ENCODE measurements at regions of chr5 and their contacts with region 1.

Region 1: DNA sequence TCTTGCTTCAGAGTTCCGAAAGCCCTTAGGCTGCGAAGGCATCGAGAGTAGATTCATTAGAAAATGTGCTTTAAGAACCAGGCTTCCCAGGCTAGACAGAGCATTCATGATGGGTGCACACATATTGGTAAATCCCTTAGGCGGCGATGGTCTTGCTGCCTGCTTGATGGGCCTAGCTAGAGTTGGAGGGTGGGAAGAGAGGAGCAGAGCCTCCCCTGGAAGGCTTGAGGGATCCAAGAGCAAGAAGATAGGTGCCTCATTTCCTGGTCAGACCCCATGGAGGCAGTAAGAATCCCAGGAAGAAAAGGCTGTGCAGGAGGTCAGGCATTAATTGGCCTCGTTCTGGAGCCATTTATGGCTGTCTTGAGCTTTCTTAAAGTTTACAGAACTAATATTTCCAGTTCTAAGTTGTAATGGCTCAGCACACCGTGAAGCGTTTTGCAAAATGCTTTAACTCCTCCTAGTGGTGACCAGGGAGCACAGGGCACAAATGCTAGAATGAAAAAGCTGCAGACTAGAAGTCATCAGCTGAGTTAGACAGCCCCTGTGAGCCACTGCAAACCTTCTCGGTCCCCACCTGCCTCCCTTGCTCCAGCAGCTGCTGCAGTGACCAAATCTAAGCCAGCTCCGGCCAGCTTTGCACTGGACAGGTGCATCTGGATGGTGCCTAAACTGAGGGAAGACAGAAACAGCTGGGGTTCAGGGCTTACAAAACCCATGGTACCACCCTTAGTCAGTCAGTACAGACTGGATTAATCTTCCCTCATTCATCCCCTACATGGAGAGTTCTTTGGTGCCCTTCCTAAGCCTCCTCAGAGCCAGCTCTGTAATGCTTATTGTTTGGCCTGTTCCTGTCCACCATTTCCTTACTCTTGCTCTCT is 14.7 kb downstream of the SLC45A2 start:
- DNase-seq: peak; percentile 15
- ATAC-seq: peak; percentile 69
- H3K4me3 Mint-ChIP-seq: no peak overlapping the region
- H3K27ac Mint-ChIP-seq: no peak overlapping the region
- H3K4me1 Mint-ChIP-seq: peaks cover 14% of the 10 kb centered on the region
- H3K27me3 Mint-ChIP-seq: no peaks in the 10 kb centered on the region
- CTCF ChIP-seq: peak; percentile 50

Region 2: DNA sequence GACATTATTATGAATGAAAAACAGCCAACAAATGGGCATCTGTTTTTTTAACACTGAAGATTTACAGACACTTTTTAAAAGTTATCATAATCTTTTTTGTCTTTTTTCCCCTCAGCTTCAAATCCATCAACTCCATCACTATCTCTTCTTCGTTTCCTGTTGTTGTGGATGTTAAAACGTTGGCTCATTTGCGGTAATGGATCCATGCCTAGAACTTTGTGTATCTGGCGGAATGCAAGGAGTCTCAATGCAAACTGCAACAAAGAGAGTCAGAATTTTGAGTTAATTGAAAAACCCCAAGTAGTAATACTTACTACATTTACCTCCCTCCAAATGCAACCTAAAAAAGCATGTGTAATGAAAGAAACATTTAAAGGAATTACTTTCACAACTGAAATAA is 1614.1 kb before region 1 on chr5:
- CTCF ChIA-PET with region 1: no interaction called
- POLR2A ChIA-PET with region 1: no interaction called
- intact Hi-C with region 1: no loop called
- DNase-seq: no peak
- ATAC-seq: no peak
- H3K4me3 Mint-ChIP-seq: no peak overlapping the region
- H3K27ac Mint-ChIP-seq: no peak overlapping the region
- H3K4me1 Mint-ChIP-seq: peaks cover 4% of the 10 kb centered on the region
- H3K27me3 Mint-ChIP-seq: no peaks in the 10 kb centered on the region
- CTCF ChIP-seq: no peak

Region 3: DNA sequence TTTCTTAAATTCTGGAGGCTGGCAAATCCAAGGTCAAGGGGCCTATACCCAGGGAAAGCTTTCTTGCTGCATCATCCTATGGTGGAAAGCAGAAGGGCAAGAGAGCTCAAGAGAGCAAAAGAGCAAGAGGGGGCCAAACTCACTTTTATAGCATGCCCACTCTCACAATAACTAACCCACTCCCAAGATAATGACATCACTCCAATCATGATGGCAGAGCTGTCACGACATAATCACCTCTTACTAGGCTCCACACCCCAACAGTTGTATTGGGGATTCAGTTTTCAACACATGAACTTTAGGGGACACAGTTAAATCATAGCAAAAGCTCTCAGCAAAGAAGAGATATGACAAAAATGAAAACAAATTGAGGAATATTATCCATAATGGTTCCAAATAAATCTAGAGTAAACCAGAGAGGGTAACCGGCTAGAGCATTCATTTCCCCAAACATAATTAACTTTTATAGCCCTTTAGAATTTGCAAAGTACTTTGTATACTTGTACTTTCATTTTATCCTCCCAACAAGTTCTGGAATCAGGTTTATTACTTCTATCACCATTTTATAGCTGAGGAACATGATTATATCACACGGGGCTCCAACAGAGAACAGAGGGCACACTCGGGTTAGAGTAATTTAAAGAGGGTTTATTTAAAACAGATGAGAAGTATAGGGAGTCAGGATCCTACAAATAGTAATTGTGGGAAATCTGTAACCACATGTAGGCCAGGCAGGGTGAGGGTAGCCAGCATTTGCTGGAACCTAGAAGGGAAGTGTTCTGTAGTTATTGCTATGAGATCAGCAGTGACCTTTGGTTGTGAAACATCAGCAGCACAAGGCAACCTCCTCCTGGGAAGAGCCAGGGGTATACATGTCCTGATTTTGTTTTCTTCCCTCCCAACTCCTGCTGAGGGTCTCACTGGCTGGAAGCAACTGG is 536.2 kb before region 1 on chr5:
- CTCF ChIA-PET with region 1: interaction called, 15 read pairs
- POLR2A ChIA-PET with region 1: no interaction called
- intact Hi-C with region 1: no loop called
- DNase-seq: no peak
- ATAC-seq: no peak
- H3K4me3 Mint-ChIP-seq: no peak overlapping the region
- H3K27ac Mint-ChIP-seq: no peak overlapping the region
- H3K4me1 Mint-ChIP-seq: peaks cover 8% of the 10 kb centered on the region
- H3K27me3 Mint-ChIP-seq: peaks cover under 1% of the 10 kb centered on the region
- CTCF ChIP-seq: no peak

Region 4: DNA sequence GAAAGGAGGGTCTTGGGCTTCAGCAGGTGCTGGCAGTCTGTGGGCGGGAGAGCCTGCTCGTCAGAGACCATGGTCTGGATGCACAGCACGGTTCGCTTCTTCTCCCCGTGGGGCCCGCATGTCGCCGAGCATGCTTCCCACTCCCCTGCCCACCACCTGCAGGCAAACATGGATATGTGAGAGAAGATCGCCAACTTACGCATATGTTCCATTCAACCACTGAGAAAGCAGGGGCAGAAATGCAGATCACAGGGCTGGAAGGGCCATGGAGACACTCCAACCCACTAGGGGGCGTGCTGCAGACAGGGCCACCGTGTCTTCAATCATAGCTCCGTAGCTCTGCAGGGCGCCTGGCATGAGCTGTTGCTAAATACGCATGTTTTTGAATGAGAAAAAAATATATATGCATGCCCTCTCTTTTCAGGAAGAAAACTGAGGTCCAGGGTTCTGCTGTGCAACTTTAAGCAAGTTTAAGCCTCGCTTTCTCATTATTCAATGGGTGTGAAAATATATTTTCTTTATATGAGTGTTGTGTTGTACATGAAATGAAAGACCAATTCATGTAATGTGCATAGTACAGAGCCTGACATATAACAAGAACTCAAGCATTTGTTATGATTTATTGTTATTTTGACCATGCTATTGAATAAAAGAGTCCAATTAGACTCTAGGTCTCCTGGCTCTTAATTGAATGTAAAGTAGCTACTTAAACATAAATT is 381.0 kb before region 1 on chr5:
- CTCF ChIA-PET with region 1: interaction called, 15 read pairs
- POLR2A ChIA-PET with region 1: no interaction called
- intact Hi-C with region 1: no loop called
- DNase-seq: peak; percentile 67
- ATAC-seq: peak; percentile 66
- H3K4me3 Mint-ChIP-seq: no peak overlapping the region
- H3K27ac Mint-ChIP-seq: no peak overlapping the region
- H3K4me1 Mint-ChIP-seq: no peaks in the 10 kb centered on the region
- H3K27me3 Mint-ChIP-seq: peaks cover 4% of the 10 kb centered on the region
- CTCF ChIP-seq: peak; percentile 65

Region 5: DNA sequence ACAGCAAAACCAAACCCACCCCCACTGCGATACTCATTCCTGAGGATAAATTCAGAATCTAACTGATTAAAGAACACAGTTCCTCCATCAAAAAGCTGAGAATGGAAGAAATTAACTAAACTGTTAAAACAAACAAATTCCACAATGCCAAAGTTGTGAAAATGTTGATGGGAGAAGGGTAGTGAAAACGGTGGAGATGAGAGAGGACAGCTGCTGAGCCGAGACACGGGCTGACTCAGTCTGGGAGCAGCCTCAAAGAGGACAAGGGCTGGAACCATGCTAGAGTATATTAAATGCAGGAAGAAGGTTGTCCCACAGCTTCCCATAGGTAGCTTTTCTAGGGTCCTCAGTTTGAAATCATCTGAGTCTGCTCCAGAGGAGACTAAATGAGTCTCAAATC is 92.4 kb before region 1 on chr5:
- CTCF ChIA-PET with region 1: no interaction called
- POLR2A ChIA-PET with region 1: no interaction called
- intact Hi-C with region 1: no loop called
- DNase-seq: no peak
- ATAC-seq: no peak
- H3K4me3 Mint-ChIP-seq: no peak overlapping the region
- H3K27ac Mint-ChIP-seq: no peak overlapping the region
- H3K4me1 Mint-ChIP-seq: no peaks in the 10 kb centered on the region
- H3K27me3 Mint-ChIP-seq: no peaks in the 10 kb centered on the region
- CTCF ChIP-seq: no peak

Region 6: GRCh38 chr5:33936004-33936380 is 33.8 kb before region 1 on chr5:
- CTCF ChIA-PET with region 1: interaction called, 26 read pairs
- POLR2A ChIA-PET with region 1: no interaction called
- intact Hi-C with region 1: no loop called
- DNase-seq: peak; percentile 64
- ATAC-seq: peak; percentile 68
- H3K4me3 Mint-ChIP-seq: no peak overlapping the region
- H3K27ac Mint-ChIP-seq: no peak overlapping the region
- H3K4me1 Mint-ChIP-seq: no peaks in the 10 kb centered on the region
- H3K27me3 Mint-ChIP-seq: peaks cover 46% of the 10 kb centered on the region
- CTCF ChIP-seq: no peak

Region 7: GRCh38 chr5:33944543-33945132 is 25.2 kb before region 1 on chr5:
- CTCF ChIA-PET with region 1: interaction called, 12 read pairs
- POLR2A ChIA-PET with region 1: no interaction called
- intact Hi-C with region 1: no loop called
- DNase-seq: no peak
- ATAC-seq: no peak
- H3K4me3 Mint-ChIP-seq: no peak overlapping the region
- H3K27ac Mint-ChIP-seq: no peak overlapping the region
- H3K4me1 Mint-ChIP-seq: no peaks in the 10 kb centered on the region
- H3K27me3 Mint-ChIP-seq: peaks cover 23% of the 10 kb centered on the region
- CTCF ChIP-seq: no peak

Region 8: GRCh38 chr5:34012791-34013190 is 43.0 kb after region 1 on chr5:
- CTCF ChIA-PET with region 1: no interaction called
- POLR2A ChIA-PET with region 1: no interaction called
- intact Hi-C with region 1: no loop called
- DNase-seq: no peak
- ATAC-seq: no peak
- H3K4me3 Mint-ChIP-seq: no peak overlapping the region
- H3K27ac Mint-ChIP-seq: no peak overlapping the region
- H3K4me1 Mint-ChIP-seq: peaks cover 20% of the 10 kb centered on the region
- H3K27me3 Mint-ChIP-seq: no peaks in the 10 kb centered on the region
- CTCF ChIP-seq: no peak